Ascending aorta (tissue), 2 donors: ENCODE measurements at regions of chr13 and their contacts with region 1.

Region 1: GRCh38 chr13:33542283-33543088 is 256.9 kb upstream of the STARD13 start:
- DNase-seq: peak; percentile 96 to 100
- H3K4me3 ChIP-seq: peak overlapping the region; percentile 66 to 69
- H3K27ac ChIP-seq: peak overlapping the region; percentile 93 to 98
- H3K4me1 ChIP-seq: peaks cover 7 to 30% of the 10 kb centered on the region in 2 donors
- H3K27me3 ChIP-seq: no peaks in the 10 kb centered on the region
- CTCF ChIP-seq: peak; percentile 87 to 93 (median 91)

Region 2: GRCh38 chr13:32538621-32539246 is 1003.8 kb before region 1 on chr13 and contains the start of gene N4BP2L2:
- intact Hi-C with region 1: loop called (anchors 1 kb)
- DNase-seq: peak; percentile 84 to 97
- H3K4me3 ChIP-seq: peak within 1 kb of the TSS; percentile 76 to 83
- H3K27ac ChIP-seq: peak within 1 kb of the TSS; percentile 81 to 93
- H3K4me1 ChIP-seq: peaks cover 3 to 18% of the 10 kb centered on the region in 2 donors
- H3K27me3 ChIP-seq: no peaks in the 10 kb centered on the region
- CTCF ChIP-seq: peak; percentile 9 to 37 (median 27)
- total RNA-seq, gene N4BP2L2: 137 TPM

Region 3: DNA sequence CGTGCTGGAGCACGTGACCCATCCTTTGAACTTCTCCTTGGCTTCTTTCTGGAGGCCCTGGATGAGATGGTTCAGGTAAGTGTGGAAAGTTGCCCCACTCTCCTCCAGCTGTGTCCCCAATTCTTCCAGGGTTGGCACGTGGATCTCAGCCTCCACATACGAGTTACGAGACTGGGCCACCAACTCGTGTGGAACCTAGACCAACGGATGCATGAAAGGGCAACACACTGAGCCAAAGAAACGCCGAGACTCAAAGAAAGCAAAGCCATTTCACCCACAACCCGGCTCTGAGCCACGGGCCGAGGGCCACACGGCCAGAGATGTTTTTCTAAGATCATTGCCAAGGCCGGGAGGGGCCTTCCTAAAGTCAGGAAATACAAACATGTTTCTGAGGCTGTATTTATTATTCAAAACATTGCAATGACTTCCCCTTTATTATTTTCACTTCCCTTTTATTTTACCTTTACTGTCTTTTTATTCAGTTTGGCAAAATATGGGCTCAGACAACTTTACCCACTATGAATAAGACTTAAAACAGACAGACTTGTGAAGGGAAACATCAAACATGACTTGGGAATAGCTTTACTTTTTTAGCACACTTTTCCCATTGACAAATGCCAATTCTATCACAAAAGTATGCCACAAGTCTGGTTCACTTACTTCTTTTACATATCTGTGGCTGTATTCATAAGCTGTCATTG is 431.6 kb before region 1 on chr13:
- intact Hi-C with region 1: loop called (anchors 5 kb)
- DNase-seq: peak in 1 of 2 donors; percentile 77
- H3K4me3 ChIP-seq: peak overlapping the region in 1 of 2 donors; percentile 29
- H3K27ac ChIP-seq: peak overlapping the region; percentile 64 to 81
- H3K4me1 ChIP-seq: peaks cover 24 to 47% of the 10 kb centered on the region in 2 donors
- H3K27me3 ChIP-seq: no peaks in the 10 kb centered on the region
- CTCF ChIP-seq: no peak

Region 4: DNA sequence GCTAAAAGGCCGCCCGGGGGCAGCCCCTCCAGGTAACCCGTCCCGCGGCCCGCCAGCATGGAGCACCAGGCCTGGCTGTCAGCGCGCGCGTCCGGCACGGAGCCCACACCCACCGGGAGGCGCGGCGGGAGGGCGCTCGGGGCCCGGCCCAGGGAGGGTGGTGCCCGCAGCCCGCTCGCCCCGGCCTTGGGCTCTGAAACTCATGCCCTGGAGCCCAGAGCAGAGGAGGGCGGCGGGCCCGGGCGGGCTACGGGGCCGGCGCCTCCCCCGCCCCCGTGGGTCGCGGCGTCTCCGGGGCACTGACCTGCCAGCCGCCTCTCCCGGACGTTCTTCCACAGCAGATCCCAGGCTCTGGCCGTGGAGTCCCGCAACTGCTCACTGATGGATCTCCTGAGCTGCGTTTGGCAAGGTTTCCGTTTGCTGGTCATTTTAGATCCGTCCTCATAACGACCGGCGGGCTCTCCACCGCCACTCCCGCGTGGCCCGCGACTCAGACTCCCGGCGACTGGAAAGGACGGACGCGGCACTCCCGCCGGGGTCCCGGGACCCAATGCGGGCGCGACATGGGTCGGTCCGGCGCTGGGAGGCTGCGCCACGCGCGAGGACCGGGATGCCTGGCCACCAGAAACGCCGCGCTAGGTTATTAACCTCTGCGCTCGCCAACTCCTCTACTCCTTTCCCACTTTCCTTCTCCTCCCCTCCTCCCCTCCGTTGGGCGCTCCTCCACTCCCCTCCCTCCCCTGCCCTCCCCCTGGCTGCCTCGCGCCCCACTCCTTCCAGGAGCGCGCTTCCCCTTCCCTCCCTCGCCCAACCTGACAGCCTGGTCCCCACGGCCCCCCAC is 192.3 kb before region 1 on chr13:
- intact Hi-C with region 1: loop called (anchors 2 kb)
- DNase-seq: peak in 1 of 2 donors; percentile 79
- H3K4me3 ChIP-seq: peak overlapping the region; percentile 64 to 96
- H3K27ac ChIP-seq: peak overlapping the region; percentile 90 to 94
- H3K4me1 ChIP-seq: peaks cover 5 to 12% of the 10 kb centered on the region in 2 donors
- H3K27me3 ChIP-seq: no peaks in the 10 kb centered on the region
- CTCF ChIP-seq: no peak

Region 5: DNA sequence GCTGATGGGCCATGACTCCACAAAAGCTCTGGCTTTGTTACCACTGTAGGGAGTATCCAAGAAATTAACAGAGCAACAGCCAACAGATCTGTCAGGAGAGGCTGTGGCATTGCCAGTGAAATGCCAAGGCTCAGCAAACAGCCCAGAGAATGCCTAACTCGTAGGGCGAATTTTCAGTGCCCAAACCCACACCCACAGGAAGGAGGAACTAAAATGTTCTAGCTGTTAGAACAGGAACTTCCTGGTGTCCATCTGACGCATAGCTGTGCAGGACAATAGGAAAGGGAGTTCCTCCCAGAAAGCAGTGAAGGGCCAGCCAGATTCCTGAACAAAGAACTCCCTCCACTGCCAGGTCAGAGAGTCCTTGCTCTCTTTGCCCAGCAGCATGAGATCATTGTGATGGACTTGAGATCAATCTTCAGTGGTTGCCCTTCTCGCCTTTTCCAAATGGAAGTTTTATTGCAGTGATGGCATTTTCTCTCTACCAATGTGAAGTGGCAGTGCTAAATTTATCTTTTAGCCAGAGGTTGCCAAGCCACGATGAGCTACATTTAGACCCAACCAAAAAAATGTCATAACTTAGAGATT is 32.8 kb before region 1 on chr13:
- intact Hi-C with region 1: loop called (anchors 2 kb)
- DNase-seq: peak; percentile 21 to 86
- H3K4me3 ChIP-seq: peak overlapping the region; percentile 7 to 38
- H3K27ac ChIP-seq: peak overlapping the region; percentile 91 to 95
- H3K4me1 ChIP-seq: peaks cover 5 to 28% of the 10 kb centered on the region in 2 donors
- H3K27me3 ChIP-seq: no peaks in the 10 kb centered on the region
- CTCF ChIP-seq: no peak

Region 6: GRCh38 chr13:34156841-34157365 is 614.4 kb after region 1 on chr13:
- intact Hi-C with region 1: loop called (anchors 5 kb)
- DNase-seq: peak; percentile 69 to 92
- H3K4me3 ChIP-seq: no peak overlapping the region
- H3K27ac ChIP-seq: peak overlapping the region; percentile 88
- H3K4me1 ChIP-seq: peaks cover 11 to 32% of the 10 kb centered on the region in 2 donors
- H3K27me3 ChIP-seq: no peaks in the 10 kb centered on the region
- CTCF ChIP-seq: no peak